ENCODE measurements at regions of chr11 and their contacts with region 1.

Region 1: DNA sequence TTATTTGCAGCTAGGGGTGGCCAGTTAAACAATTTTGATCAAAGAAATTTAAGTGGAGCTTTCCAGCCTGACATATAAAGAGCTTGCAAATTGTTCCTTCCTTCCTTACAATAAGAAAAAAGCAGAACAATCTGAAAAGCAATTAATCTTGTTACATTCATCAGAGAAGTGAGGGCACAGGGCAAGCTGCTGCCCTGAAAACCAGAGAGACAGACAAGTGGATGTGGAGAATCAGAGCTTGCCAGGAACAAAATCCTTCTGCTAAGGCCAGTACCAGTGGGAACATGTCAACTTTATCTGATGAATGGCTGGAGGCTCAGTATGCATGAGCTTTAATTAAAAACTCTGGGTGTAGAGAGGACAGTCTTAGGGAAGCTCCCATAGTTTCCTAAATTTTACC is 8.8 kb downstream of the CCDC179 start:
- DNase-seq: no peak
- ATAC-seq: no peak

Region 2: DNA sequence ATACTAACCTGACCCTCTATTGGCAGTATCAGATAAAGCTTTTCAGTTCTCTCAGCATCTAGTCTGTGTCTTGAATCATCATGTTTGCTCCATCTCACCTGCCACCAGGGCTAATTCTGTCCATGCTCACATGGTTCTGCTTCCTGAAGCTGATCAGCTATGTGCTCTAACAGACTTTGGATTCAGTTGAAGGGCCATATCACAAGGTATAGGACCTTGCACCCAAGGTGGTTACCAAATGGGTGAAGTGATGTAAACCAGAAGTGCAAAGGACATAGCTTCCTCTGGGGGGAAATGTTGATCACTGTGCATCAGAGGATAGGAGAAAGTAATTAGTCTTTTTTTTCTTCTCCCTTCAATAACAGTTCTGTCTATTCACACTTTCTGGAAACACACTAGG is 1075.6 kb before region 1 on chr11:
- intact Hi-C with region 1: loop called (anchors 5 kb)
- DNase-seq: no peak
- ATAC-seq: no peak